Mammary epithelial cell (primary cell): ENCODE measurements at regions of chr3 and their contacts with region 1.

Region 1: GRCh38 chr3:31377045-31377642 is 155.6 kb upstream of the STT3B start:
- DNase-seq: peak; percentile 93
- H3K4me3 ChIP-seq: no peak overlapping the region
- H3K27ac ChIP-seq: no peak overlapping the region
- H3K4me1 ChIP-seq: peaks cover 10% of the 10 kb centered on the region
- H3K27me3 ChIP-seq: no peaks in the 10 kb centered on the region
- CTCF ChIP-seq: no peak

Region 2: DNA sequence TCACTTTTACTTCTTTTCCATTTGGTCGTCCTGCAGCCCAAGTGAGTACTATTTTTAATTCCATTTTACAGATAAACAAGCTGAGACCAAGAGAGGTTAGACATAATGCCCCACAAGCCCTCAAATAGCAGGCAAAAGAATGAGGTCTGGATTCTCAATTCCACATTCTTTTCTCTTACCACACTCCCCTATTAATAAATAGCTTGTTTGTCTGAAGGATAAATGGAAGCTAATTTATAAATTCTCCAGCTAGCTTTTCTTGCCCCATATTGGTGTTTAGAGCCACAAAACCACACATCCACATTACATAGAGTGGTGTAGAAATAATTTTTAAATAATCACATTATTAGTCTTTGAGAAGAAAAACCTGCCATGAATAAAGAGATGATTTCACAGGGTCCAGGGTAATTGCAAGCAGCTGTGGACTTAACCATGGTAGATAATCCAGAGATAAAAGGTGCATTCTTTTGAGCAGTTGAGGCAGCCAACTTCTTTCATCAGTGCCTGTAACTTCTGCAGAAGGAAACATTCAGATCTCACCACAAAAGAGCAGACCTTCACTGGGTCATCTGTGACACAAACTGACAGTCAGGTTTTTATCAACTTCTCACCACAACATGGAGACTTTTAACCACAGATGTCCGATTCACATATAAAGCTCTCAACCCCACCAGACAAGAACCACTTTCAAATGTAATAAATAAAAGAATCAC is 157.9 kb before region 1 on chr3:
- CTCF ChIA-PET with region 1: no interaction called
- dilution Hi-C with region 1: no loop called
- in situ Hi-C with region 1: no loop called
- intact Hi-C with region 1: loop called (anchors 10 kb)
- DNase-seq: no peak
- H3K4me3 ChIP-seq: no peak overlapping the region
- H3K27ac ChIP-seq: no peak overlapping the region
- H3K4me1 ChIP-seq: no peaks in the 10 kb centered on the region
- H3K27me3 ChIP-seq: no peaks in the 10 kb centered on the region
- CTCF ChIP-seq: no peak

Region 3: DNA sequence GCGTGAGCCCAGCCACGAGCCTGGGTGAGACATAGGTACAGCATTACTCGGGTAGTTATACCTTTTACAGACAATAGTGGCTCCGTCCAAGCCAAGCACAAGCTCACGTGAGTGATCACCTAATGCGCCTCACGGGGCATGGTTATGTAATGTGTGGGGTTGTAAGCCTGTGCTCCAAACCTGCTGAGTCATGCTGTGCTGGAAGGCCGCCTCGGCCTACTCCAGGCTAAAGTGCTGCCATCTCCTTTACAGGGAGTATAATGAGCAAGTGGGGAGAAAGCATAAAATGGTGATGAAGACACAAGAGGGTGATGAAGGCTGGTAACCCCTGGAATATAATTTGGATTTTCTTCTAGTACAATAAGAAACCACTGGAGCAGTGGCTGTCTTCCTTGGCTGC is 20.2 kb before region 1 on chr3:
- CTCF ChIA-PET with region 1: no interaction called
- dilution Hi-C with region 1: no loop called
- in situ Hi-C with region 1: no loop called
- intact Hi-C with region 1: no loop called
- DNase-seq: peak; percentile 78
- H3K4me3 ChIP-seq: no peak overlapping the region
- H3K27ac ChIP-seq: peak overlapping the region; percentile 3
- H3K4me1 ChIP-seq: peaks cover 10% of the 10 kb centered on the region
- H3K27me3 ChIP-seq: no peaks in the 10 kb centered on the region
- CTCF ChIP-seq: no peak

Region 4: GRCh38 chr3:31531992-31532586 is 154.9 kb after region 1 on chr3:
- CTCF ChIA-PET with region 1: no interaction called
- dilution Hi-C with region 1: no loop called
- in situ Hi-C with region 1: no loop called
- intact Hi-C with region 1: loop called (anchors 2 kb)
- DNase-seq: peak; percentile 98
- H3K4me3 ChIP-seq: peak overlapping the region; percentile 85 to 95 (median 89)
- H3K27ac ChIP-seq: peak overlapping the region; percentile 81
- H3K4me1 ChIP-seq: peaks cover 4% of the 10 kb centered on the region
- H3K27me3 ChIP-seq: no peaks in the 10 kb centered on the region
- CTCF ChIP-seq: no peak